ENCODE measurements at regions of chr13 and their contacts with region 1.

Region 1: DNA sequence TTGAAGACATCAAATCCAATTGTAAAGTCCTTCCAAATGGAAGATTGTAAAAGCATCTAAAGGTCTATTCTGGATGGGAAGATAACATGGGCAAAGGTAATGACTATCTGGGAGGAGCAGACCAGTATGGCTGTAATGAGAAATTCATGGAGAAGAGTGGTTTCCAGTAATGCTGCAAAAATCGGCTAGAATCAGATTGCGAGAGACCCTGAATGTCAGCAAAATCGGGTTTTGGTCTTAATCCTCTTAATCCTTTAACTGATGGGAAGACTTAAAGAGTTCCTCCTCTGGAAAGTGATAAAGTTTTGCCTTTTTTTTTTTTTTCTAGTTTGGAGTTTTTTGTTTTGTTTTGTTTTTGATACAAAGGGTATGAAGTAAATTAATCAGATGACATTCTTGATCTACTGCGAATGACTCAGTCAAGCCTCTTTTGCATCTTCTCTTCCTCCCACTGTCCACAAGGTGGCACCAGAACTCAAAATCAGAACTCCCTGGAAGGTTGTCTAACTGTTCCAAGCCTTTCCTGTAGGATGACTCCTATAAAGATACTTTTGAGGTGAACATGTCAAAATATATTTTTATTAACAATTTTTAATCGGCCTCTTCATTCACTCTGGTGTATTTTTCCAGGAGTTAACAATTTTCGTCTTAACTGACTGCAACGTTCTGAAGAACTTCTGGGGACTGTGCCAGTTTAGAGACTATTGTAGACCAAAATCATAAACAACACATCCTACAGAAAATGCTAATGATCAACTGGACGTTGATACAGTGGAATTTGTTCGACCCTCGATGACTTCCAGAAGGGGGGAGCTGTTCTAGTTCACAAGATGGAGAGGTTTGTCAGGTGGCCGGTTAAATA is 213.3 kb upstream of the MIR17HG start:
- DNase-seq: no peak
- ATAC-seq: peak; percentile 90
- H3K4me3 ChIP-seq: no peak overlapping the region
- H3K27ac ChIP-seq: no peak overlapping the region
- H3K4me1 ChIP-seq: no peaks in the 10 kb centered on the region
- H3K27me3 ChIP-seq: no peaks in the 10 kb centered on the region
- CTCF ChIP-seq: peak; percentile 68 to 78 (median 75)
- EP300 ChIP-seq: no peak
- POLR2A ChIP-seq: no peak
- RAD21 ChIP-seq: peak; percentile 80

Region 2: GRCh38 chr13:91154558-91155353 is 20.6 kb after region 1 on chr13:
- CTCF ChIA-PET with region 1: interaction called, 12 read pairs
- POLR2A ChIA-PET with region 1: no interaction called
- RAD21 ChIA-PET with region 1: no interaction called
- SMC1A ChIA-PET with region 1: interaction called, 3 read pairs
- in situ Hi-C with region 1: no loop called
- intact Hi-C with region 1: no loop called
- DNase-seq: no peak
- ATAC-seq: peak; percentile 89
- H3K4me3 ChIP-seq: no peak overlapping the region
- H3K27ac ChIP-seq: no peak overlapping the region
- H3K4me1 ChIP-seq: no peaks in the 10 kb centered on the region
- H3K27me3 ChIP-seq: peaks cover 0 to 3% of the 10 kb centered on the region in 2 experiments; a peak in 2 of 4 replicates
- CTCF ChIP-seq: no peak
- EP300 ChIP-seq: no peak
- POLR2A ChIP-seq: no peak
- RAD21 ChIP-seq: no peak

Region 3: DNA sequence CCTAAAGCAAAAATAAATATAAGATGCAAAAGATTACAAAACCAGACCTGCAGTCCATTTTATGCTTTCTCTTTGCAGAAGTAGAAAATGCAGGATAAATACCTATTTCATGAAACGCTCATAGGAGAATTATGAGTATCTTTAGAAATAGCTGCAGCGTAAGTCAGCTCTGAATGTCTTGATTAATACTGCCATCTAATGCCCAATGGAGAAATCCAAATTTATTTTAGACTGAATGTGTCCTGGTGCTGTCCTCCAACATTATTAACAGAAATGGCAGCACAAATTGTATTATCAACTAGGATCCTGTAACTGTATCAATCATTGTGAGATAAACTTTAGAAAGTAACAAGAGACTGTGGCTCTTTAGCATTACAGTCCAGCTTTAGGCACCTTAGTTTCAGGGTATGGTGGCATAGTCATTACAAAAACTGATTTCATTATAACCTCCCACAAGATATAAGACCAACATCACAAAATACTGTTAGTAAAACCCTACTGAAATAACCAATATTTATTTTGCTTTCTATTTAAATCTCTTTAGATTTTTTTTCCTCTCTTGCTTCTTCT is 51.2 kb after region 1 on chr13:
- CTCF ChIA-PET with region 1: interaction called, 13 read pairs
- POLR2A ChIA-PET with region 1: no interaction called
- RAD21 ChIA-PET with region 1: interaction called, 4 read pairs
- SMC1A ChIA-PET with region 1: interaction called, 13 read pairs
- in situ Hi-C with region 1: no loop called
- intact Hi-C with region 1: loop called (anchors 2 kb)
- DNase-seq: no peak
- ATAC-seq: peak; percentile 44; the same call in 1 of the 3 replicates
- H3K4me3 ChIP-seq: no peak overlapping the region
- H3K27ac ChIP-seq: no peak overlapping the region
- H3K4me1 ChIP-seq: no peaks in the 10 kb centered on the region
- H3K27me3 ChIP-seq: no peaks in the 10 kb centered on the region
- CTCF ChIP-seq: no peak; a peak in 1 of 6 replicates
- EP300 ChIP-seq: no peak
- POLR2A ChIP-seq: no peak
- RAD21 ChIP-seq: peak; percentile 51

Region 4: DNA sequence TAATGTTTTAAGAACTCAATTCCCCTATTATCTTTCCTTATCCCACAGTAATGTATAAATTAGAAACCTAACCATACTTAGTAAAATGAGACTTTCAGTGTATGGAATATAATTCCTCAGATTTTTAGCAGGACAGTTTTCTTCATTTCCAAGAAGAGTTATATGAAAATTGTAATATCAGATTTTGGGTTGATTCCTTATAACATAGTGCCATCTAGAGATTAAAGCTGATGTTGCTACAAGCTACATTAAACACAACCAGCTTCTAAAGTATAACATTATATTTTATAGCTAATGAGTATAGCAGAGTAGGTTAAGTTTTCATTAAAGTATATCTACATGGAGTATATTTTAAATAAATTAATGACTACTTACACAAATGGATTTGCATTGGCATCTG is 113.6 kb after region 1 on chr13:
- CTCF ChIA-PET with region 1: interaction called, 15 read pairs
- POLR2A ChIA-PET with region 1: no interaction called
- RAD21 ChIA-PET with region 1: interaction called, 6 read pairs
- SMC1A ChIA-PET with region 1: interaction called, 19 read pairs
- in situ Hi-C with region 1: no loop called
- intact Hi-C with region 1: loop called (anchors 2 kb)
- DNase-seq: no peak
- ATAC-seq: 0 out of 3 replicates have a peak, but pooled peaks have one; percentile 27
- H3K4me3 ChIP-seq: no peak overlapping the region
- H3K27ac ChIP-seq: no peak overlapping the region
- H3K4me1 ChIP-seq: no peaks in the 10 kb centered on the region
- H3K27me3 ChIP-seq: peaks cover 0 to 7% of the 10 kb centered on the region in 2 experiments; a peak in 3 of 4 replicates
- CTCF ChIP-seq: peak in 2 of 3 experiments; percentile 4 to 31; a peak in 3 of 6 replicates
- EP300 ChIP-seq: no peak
- POLR2A ChIP-seq: no peak
- RAD21 ChIP-seq: peak; percentile 52

Region 5: DNA sequence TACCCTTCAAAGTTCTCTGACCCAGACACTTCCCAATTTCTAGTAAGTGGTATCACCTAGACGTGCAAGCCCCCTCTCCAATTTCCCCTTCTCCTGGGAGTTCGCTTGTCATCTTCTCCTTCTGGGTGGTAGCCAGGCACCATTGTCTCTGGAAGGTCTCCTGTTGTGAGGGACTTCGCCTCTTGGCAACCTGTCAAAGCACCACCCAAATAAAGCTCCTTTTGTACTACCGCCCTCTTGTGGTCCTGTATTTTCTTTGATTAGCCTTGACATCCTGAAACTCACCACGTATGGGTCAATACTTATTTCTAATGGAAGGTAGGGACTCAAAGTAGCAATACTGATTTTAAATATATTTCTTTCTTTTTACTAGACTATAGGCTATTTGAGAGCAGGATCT is 272.4 kb after region 1 on chr13:
- CTCF ChIA-PET with region 1: interaction called, 12 read pairs
- POLR2A ChIA-PET with region 1: no interaction called
- RAD21 ChIA-PET with region 1: no interaction called
- SMC1A ChIA-PET with region 1: interaction called, 7 read pairs
- in situ Hi-C with region 1: no loop called
- intact Hi-C with region 1: loop called (anchors 1 kb)
- DNase-seq: no peak
- ATAC-seq: peak; percentile 92
- H3K4me3 ChIP-seq: no peak overlapping the region
- H3K27ac ChIP-seq: no peak overlapping the region
- H3K4me1 ChIP-seq: peaks cover 3% of the 10 kb centered on the region; the same call in 1 of the 2 replicates
- H3K27me3 ChIP-seq: no peaks in the 10 kb centered on the region
- CTCF ChIP-seq: peak; percentile 60 to 68 (median 67); a peak in 5 of 6 replicates
- EP300 ChIP-seq: no peak
- POLR2A ChIP-seq: no peak
- RAD21 ChIP-seq: peak; percentile 77

Region 6: GRCh38 chr13:91647361-91647990 is 513.3 kb after region 1 on chr13:
- CTCF ChIA-PET with region 1: no interaction called
- POLR2A ChIA-PET with region 1: no interaction called
- RAD21 ChIA-PET with region 1: no interaction called
- SMC1A ChIA-PET with region 1: no interaction called
- in situ Hi-C with region 1: no loop called
- intact Hi-C with region 1: no loop called
- DNase-seq: no peak
- ATAC-seq: peak; percentile 79
- H3K4me3 ChIP-seq: no peak overlapping the region
- H3K27ac ChIP-seq: no peak overlapping the region
- H3K4me1 ChIP-seq: no peaks in the 10 kb centered on the region
- H3K27me3 ChIP-seq: no peaks in the 10 kb centered on the region
- CTCF ChIP-seq: peak; percentile 45 to 72 (median 59)
- EP300 ChIP-seq: no peak
- POLR2A ChIP-seq: no peak
- RAD21 ChIP-seq: peak; percentile 36; the same call in 1 of the 2 replicates

Region 7: DNA sequence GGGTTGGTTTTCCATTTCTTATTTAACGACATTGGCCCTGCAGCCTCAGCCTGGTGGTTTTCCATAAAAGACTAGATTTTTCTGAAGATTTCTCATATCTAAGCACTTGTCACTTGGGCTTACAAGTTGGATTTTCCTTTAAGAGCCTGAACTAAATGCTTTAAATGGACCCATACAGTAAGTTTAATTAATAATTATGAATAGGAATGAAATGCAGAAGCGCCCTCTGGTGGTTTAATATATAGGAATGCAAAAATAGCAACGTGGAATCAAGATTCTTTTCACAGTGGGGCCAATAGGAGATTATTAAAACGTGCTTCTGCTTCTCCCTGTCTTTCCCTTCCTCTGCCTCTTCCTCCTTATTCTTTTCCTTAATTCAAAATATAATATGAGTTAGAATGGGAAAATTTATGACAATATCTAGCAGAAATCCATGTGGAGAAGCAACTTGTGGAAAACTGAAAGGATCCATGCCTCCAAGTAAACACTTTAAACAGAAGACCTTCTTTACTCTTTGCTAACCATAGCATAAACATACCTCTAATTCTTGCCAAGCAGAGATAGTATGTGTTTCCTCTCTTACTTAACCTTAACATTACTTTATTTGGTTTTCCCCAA is 588.2 kb after region 1 on chr13:
- CTCF ChIA-PET with region 1: no interaction called
- POLR2A ChIA-PET with region 1: no interaction called
- RAD21 ChIA-PET with region 1: no interaction called
- SMC1A ChIA-PET with region 1: no interaction called
- in situ Hi-C with region 1: no loop called
- intact Hi-C with region 1: loop called (anchors 5 kb)
- DNase-seq: no peak
- ATAC-seq: no peak
- H3K4me3 ChIP-seq: no peak overlapping the region
- H3K27ac ChIP-seq: no peak overlapping the region
- H3K4me1 ChIP-seq: no peaks in the 10 kb centered on the region
- H3K27me3 ChIP-seq: peaks cover 0 to 3% of the 10 kb centered on the region in 2 experiments; a peak in 1 of 4 replicates
- CTCF ChIP-seq: peak; percentile 33 to 50 (median 42); a peak in 4 of 6 replicates
- EP300 ChIP-seq: no peak
- POLR2A ChIP-seq: no peak
- RAD21 ChIP-seq: peak; percentile 45